PC-9 (cell line): ENCODE measurements at regions of chr12 and their contacts with region 1.

Region 1: GRCh38 chr12:26097046-26097878 is 27.6 kb downstream of the BHLHE41 start:
- DNase-seq: peak; percentile 74 to 82
- H3K4me3 ChIP-seq: peak overlapping the region; percentile 12; the same call in 1 of the 2 replicates
- H3K27ac ChIP-seq: peak overlapping the region; percentile 66
- H3K4me1 ChIP-seq: peaks cover 66% of the 10 kb centered on the region
- H3K27me3 ChIP-seq: no peaks in the 10 kb centered on the region
- CTCF ChIP-seq: peak; percentile 95

Region 2: DNA sequence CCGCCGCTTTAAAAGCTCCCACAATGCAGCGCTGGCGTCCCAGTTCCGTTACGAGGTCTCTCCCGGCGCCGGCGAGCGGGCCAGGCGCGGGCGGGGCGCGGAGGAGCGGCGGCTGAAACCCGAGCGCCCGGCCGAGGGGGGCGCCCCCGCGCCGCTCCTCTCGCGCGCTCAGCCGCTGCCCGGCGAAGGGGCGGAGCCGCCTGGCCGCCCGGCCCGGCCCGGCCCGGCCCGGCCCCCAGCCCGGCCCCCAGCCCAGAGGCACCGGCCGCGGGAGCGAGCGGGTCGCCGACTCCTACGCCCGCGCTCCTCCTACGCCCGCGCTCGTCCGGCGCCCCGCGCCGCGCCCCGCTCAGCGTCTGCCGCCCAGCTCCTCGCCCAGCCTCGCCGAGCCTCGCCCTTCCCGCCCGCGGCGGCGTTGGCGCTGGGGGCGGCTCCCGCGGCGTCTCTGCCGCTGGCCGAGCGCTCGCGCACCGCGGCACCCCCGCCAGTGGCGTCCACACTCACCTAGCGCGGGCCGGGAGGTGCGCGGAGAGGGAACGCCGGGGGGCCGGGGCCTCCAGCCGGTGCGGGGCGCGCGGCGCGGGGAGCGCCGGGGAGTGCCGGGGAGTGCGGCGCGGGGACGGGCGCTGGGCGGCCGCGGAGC is 138.7 kb before region 1 on chr12 and contains the start of gene RASSF8:
- CTCF ChIA-PET with region 1: no interaction called
- POLR2A ChIA-PET with region 1: no interaction called
- intact Hi-C with region 1: loop called (anchors 5 kb)
- DNase-seq: peak; percentile 35 to 87
- H3K4me3 ChIP-seq: peak within 1 kb of the TSS; percentile 84
- H3K27ac ChIP-seq: peak within 1 kb of the TSS; percentile 58
- H3K4me1 ChIP-seq: peaks cover 26% of the 10 kb centered on the region
- H3K27me3 ChIP-seq: no peaks in the 10 kb centered on the region
- CTCF ChIP-seq: no peak
- total RNA-seq, gene RASSF8: 26.5 and 30.6 TPM in 2 replicates

Region 3: GRCh38 chr12:26119391-26119981 is 22.2 kb after region 1 on chr12:
- CTCF ChIA-PET with region 1: interaction called, 11 read pairs
- POLR2A ChIA-PET with region 1: interaction called, 8 read pairs
- intact Hi-C with region 1: loop called (anchors 1 kb)
- DNase-seq: peak in 1 of 2 experiments; percentile 52
- H3K4me3 ChIP-seq: peak overlapping the region; percentile 87; the same call in 1 of the 2 replicates
- H3K27ac ChIP-seq: peak overlapping the region; percentile 97
- H3K4me1 ChIP-seq: peaks cover 61% of the 10 kb centered on the region
- H3K27me3 ChIP-seq: no peaks in the 10 kb centered on the region
- CTCF ChIP-seq: peak; percentile 71

Region 4: DNA sequence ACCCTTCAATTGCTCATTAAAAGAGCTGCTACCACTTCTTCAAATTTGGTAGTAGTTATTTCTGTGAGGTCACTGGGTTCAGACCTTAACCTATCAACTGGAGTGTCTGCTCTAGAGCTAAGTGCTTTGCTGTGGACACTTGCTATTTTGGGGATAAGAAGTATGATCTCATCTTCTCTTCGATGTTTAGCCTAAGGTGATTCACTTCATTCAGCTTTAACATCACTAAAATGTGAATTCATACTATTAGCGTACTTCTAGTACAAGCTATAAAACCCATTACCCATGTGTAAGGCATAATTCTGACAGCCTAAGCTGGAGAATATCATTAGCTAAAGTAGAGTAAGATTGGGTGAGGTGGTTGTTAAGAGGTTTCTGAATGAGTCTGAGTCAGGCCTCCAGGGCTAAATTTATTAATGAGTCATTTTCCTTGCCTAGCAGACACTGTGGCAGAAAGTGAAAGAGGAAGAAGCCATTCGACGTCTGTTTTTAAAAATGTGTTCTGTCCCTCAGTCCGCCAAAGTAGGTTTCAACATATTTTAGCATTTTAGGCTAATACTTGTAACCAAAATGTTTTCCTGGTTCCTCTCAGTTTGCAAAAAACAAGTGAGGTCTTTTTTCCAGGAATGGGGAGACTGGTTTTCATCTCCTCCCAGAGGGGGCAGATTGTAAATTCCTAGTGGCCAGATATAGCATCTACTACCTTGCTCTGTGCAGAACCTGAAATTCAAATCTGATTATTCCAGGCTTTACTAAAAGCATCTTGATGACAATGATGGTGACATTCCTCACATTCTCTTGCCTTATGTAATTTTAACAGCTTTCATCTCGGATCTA is 201.7 kb after region 1 on chr12:
- CTCF ChIA-PET with region 1: no interaction called
- POLR2A ChIA-PET with region 1: no interaction called
- intact Hi-C with region 1: loop called (anchors 1 kb)
- DNase-seq: peak; percentile 49 to 84
- H3K4me3 ChIP-seq: peak overlapping the region; percentile 56
- H3K27ac ChIP-seq: peak overlapping the region; percentile 85
- H3K4me1 ChIP-seq: peaks cover 19% of the 10 kb centered on the region
- H3K27me3 ChIP-seq: no peaks in the 10 kb centered on the region
- CTCF ChIP-seq: peak; percentile 62

Region 5: DNA sequence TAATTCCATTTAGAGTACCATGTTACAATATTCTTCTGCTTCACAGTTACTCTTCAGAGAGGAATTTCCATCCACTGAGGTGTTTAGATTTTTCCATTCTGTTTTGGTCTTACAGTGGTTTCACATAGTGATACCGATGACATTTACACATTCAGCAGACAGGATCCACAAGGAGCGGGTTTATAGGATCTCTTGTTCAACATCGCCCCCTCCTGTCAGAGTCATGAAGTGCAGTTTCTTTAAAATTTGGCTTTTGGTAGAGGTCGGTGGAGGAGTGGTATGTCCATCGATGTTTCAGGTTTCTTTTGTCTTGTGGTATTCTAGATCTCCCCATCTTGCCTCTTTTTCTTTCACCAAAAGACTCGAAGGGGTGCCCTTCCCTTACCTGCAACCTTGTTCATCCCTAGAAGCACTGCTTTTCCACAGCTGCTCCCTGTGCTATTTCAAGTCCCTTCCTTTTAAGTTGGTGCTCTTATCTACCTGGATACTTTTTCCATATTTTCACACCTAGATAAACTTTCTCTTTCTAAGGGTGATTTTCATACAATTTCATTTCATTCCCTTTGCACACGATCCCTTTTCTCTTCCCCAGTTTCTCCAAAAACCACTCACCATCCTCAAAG is 554.4 kb after region 1 on chr12:
- CTCF ChIA-PET with region 1: interaction called, 4 read pairs
- POLR2A ChIA-PET with region 1: no interaction called
- intact Hi-C with region 1: loop called (anchors 1 kb)
- DNase-seq: peak; percentile 67 to 77
- H3K4me3 ChIP-seq: no peak overlapping the region
- H3K27ac ChIP-seq: no peak overlapping the region
- H3K4me1 ChIP-seq: peaks cover 12% of the 10 kb centered on the region; the same call in 1 of the 2 replicates
- H3K27me3 ChIP-seq: no peaks in the 10 kb centered on the region
- CTCF ChIP-seq: peak; percentile 97

Region 6: GRCh38 chr12:27462151-27462694 is 1365.0 kb after region 1 on chr12:
- CTCF ChIA-PET with region 1: interaction called, 14 read pairs
- POLR2A ChIA-PET with region 1: no interaction called
- intact Hi-C with region 1: no loop called
- DNase-seq: no peak
- H3K4me3 ChIP-seq: no peak overlapping the region
- H3K27ac ChIP-seq: no peak overlapping the region
- H3K4me1 ChIP-seq: peaks cover 13% of the 10 kb centered on the region
- H3K27me3 ChIP-seq: no peaks in the 10 kb centered on the region
- CTCF ChIP-seq: no peak